CD8-positive, alpha-beta T cell (primary cell): ENCODE measurements at regions of chr1 and their contacts with region 1.

Region 1: GRCh38 chr1:229370601-229371021 is 27.8 kb upstream of the CCSAP start:
- DNase-seq: no peak
- ATAC-seq: no peak
- H3K4me3 ChIP-seq: no peak overlapping the region
- H3K4me3 Mint-ChIP-seq: no peak overlapping the region
- H3K27ac ChIP-seq: no peak overlapping the region
- H3K27ac Mint-ChIP-seq: no peak overlapping the region
- H3K4me1 ChIP-seq: no peaks in the 10 kb centered on the region
- H3K4me1 Mint-ChIP-seq: peaks cover 4% of the 10 kb centered on the region
- H3K27me3 ChIP-seq: no peaks in the 10 kb centered on the region
- H3K27me3 Mint-ChIP-seq: peaks cover 18% of the 10 kb centered on the region
- CTCF ChIP-seq: no peak

Region 2: DNA sequence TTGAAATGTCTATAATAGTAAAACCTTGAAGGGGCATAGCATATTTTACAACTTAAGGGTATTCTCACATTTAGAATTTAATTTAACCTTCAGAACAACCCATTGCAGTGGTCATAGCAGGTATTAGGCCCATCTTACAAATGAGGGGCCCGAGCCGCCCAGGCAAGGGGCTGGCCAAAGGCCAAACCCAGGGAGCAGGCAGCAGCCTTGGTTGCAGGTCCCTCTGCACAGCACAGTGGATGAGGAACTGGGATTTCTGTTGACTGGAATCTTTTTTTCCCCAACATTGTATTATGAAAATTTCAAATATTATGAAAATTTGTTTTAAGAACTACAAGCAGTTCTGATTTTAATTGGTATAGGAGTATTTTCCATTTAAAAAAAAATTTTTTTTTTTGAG is 60.9 kb before region 1 on chr1:
- CTCF ChIA-PET with region 1: no interaction called
- POLR2A ChIA-PET with region 1: no interaction called
- intact Hi-C with region 1: loop called in 1 of 2 experiments (anchors 5 kb)
- DNase-seq: no peak
- ATAC-seq: no peak
- H3K4me3 ChIP-seq: no peak overlapping the region
- H3K4me3 Mint-ChIP-seq: no peak overlapping the region
- H3K27ac ChIP-seq: no peak overlapping the region
- H3K27ac Mint-ChIP-seq: no peak overlapping the region
- H3K4me1 ChIP-seq: no peaks in the 10 kb centered on the region
- H3K4me1 Mint-ChIP-seq: no peaks in the 10 kb centered on the region
- H3K27me3 ChIP-seq: no peaks in the 10 kb centered on the region
- H3K27me3 Mint-ChIP-seq: no peaks in the 10 kb centered on the region
- CTCF ChIP-seq: no peak